ENCODE measurements at regions of chr13 and their contacts with region 1.

Region 1: DNA sequence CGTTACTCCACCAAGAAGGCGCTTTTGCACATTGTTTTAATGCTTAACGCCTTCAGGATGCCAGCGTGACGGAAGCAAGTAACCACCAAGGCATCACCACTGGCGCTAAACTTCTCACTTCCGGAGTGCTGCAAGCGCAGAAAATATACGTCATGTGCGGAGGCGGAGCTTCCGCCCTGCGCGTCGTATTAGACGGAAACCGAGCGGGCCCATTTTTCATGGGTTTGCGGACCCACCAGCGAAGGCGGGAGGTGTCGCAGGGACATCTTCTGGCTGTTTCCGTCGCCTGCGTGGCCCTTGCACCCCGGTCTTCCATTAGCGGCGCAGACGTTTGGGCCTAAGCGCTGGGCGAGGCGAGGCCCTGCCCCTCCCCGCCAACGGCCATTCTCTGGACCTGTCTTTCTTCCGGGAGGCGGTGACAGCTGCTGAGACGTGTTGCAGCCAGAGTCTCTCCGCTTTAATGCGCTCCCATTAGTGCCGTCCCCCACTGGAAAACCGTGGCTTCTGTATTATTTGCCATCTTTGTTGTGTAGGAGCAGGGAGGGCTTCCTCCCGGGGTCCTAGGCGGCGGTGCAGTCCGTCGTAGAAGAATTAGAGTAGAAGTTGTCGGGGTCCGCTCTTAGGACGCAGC is at the start of gene ERCC5:
- DNase-seq: peak; percentile 94 to 99 (median 97)
- ATAC-seq: peak; percentile 69
- H3K4me3 ChIP-seq: peak within 1 kb of the TSS; percentile 94 to 96
- H3K4me3 Mint-ChIP-seq: peak within 1 kb of the TSS; percentile 89
- H3K27ac ChIP-seq: peak within 1 kb of the TSS; percentile 98 to 99
- H3K27ac Mint-ChIP-seq: peak within 1 kb of the TSS; percentile 97
- H3K4me1 ChIP-seq: peaks cover 41% of the 10 kb centered on the region
- H3K4me1 Mint-ChIP-seq: peaks cover 45% of the 10 kb centered on the region
- H3K27me3 ChIP-seq: no peaks in the 10 kb centered on the region
- H3K27me3 Mint-ChIP-seq: no peaks in the 10 kb centered on the region
- CTCF ChIP-seq: no peak
- total RNA-seq, gene ERCC5: 109 to 121 TPM

Region 2: DNA sequence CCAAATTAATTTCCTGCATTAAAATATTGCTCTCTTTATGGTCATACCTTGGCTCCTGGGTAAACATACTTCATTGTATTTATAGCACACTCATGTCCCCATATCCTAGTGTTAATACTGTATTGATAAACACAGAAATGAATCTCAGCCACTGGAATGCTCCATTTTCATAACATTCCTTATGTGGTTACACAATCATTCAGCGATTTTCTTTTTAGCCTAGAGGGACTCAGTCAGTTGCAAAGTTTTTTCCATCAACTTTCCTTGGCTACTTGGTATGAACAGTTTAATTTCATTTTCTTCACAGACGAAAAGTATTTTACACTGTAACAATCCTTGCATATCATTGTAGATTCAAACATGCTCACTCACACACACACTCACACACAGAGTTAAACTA is 915.4 kb before region 1 on chr13:
- CTCF ChIA-PET with region 1: no interaction called
- POLR2A ChIA-PET with region 1: no interaction called
- intact Hi-C with region 1: no loop called
- DNase-seq: no peak
- ATAC-seq: no peak
- H3K4me3 ChIP-seq: no peak overlapping the region
- H3K4me3 Mint-ChIP-seq: no peak overlapping the region
- H3K27ac ChIP-seq: no peak overlapping the region
- H3K27ac Mint-ChIP-seq: no peak overlapping the region
- H3K4me1 ChIP-seq: no peaks in the 10 kb centered on the region
- H3K4me1 Mint-ChIP-seq: no peaks in the 10 kb centered on the region
- H3K27me3 ChIP-seq: no peaks in the 10 kb centered on the region
- H3K27me3 Mint-ChIP-seq: peaks cover 4% of the 10 kb centered on the region
- CTCF ChIP-seq: no peak

Region 3: GRCh38 chr13:102394158-102395053 is 451.3 kb before region 1 on chr13:
- CTCF ChIA-PET with region 1: no interaction called
- POLR2A ChIA-PET with region 1: interaction called, 4 read pairs
- intact Hi-C with region 1: loop called (anchors 2 to 5 kb)
- DNase-seq: peak; percentile 88 to 98 (median 97)
- ATAC-seq: peak; percentile 90
- H3K4me3 ChIP-seq: peak overlapping the region; percentile 79 to 96
- H3K4me3 Mint-ChIP-seq: peak overlapping the region; percentile 88
- H3K27ac ChIP-seq: peak overlapping the region; percentile 65 to 76
- H3K27ac Mint-ChIP-seq: peak overlapping the region; percentile 82
- H3K4me1 ChIP-seq: peaks cover 14% of the 10 kb centered on the region
- H3K4me1 Mint-ChIP-seq: peaks cover 8% of the 10 kb centered on the region
- H3K27me3 ChIP-seq: peaks cover 1 to 2% of the 10 kb centered on the region in 2 experiments
- H3K27me3 Mint-ChIP-seq: peaks cover 12% of the 10 kb centered on the region
- CTCF ChIP-seq: no peak

Region 4: DNA sequence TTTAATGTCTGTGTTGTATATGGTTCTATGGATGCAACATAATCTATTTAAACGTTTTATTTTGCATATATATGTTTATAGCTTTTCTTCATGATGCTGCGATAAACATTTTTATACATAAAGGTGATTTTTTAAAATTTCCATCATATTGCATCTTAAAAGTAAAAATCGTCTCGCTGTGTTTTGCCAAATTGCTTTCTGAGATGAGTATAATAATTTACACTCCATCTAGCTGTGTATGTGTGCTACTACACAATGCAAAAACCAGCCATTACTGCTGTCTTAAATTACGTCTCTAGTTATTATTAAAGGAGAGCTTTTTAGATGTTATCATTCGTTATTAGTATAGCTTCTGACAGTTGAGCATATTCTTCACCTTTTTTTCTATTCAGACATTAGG is 188.1 kb before region 1 on chr13:
- CTCF ChIA-PET with region 1: interaction called, 3 read pairs
- POLR2A ChIA-PET with region 1: no interaction called
- intact Hi-C with region 1: loop called in 1 of 2 experiments (anchors 5 kb)
- DNase-seq: peak in 2 of 9 experiments; percentile 13 to 27
- ATAC-seq: peak; percentile 55
- H3K4me3 ChIP-seq: no peak overlapping the region
- H3K4me3 Mint-ChIP-seq: no peak overlapping the region
- H3K27ac ChIP-seq: no peak overlapping the region
- H3K27ac Mint-ChIP-seq: no peak overlapping the region
- H3K4me1 ChIP-seq: no peaks in the 10 kb centered on the region
- H3K4me1 Mint-ChIP-seq: no peaks in the 10 kb centered on the region
- H3K27me3 ChIP-seq: no peaks in the 10 kb centered on the region
- H3K27me3 Mint-ChIP-seq: no peaks in the 10 kb centered on the region
- CTCF ChIP-seq: peak; percentile 63

Region 5: GRCh38 chr13:102773441-102774215 is 72.1 kb before region 1 on chr13 and contains the start of gene TEX30:
- CTCF ChIA-PET with region 1: interaction called, 3 read pairs
- POLR2A ChIA-PET with region 1: interaction called, 36 read pairs
- intact Hi-C with region 1: loop called (anchors 1 kb)
- DNase-seq: peak; percentile 75 to 93 (median 86)
- ATAC-seq: peak; percentile 96
- H3K4me3 ChIP-seq: peak within 1 kb of the TSS; percentile 66 to 70
- H3K4me3 Mint-ChIP-seq: peak within 1 kb of the TSS; percentile 88
- H3K27ac ChIP-seq: peak within 1 kb of the TSS; percentile 70 to 82
- H3K27ac Mint-ChIP-seq: peak within 1 kb of the TSS; percentile 91
- H3K4me1 ChIP-seq: peaks cover 15% of the 10 kb centered on the region
- H3K4me1 Mint-ChIP-seq: peaks cover 34% of the 10 kb centered on the region
- H3K27me3 ChIP-seq: no peaks in the 10 kb centered on the region
- H3K27me3 Mint-ChIP-seq: no peaks in the 10 kb centered on the region
- CTCF ChIP-seq: no peak
- total RNA-seq, gene TEX30: 10.4 to 10.9 TPM

Region 6: GRCh38 chr13:102870677-102871415 is 25.1 kb after region 1 on chr13:
- CTCF ChIA-PET with region 1: interaction called, 3 read pairs
- POLR2A ChIA-PET with region 1: interaction called, 6 read pairs
- intact Hi-C with region 1: loop called in 1 of 2 experiments (anchors 2 kb)
- DNase-seq: peak in 7 of 9 experiments; percentile 29 to 69 (median 56)
- ATAC-seq: peak; percentile 79
- H3K4me3 ChIP-seq: no peak overlapping the region
- H3K4me3 Mint-ChIP-seq: no peak overlapping the region
- H3K27ac ChIP-seq: peak overlapping the region in 1 of 2 experiments; percentile 4
- H3K27ac Mint-ChIP-seq: no peak overlapping the region
- H3K4me1 ChIP-seq: peaks cover 15% of the 10 kb centered on the region
- H3K4me1 Mint-ChIP-seq: peaks cover 24% of the 10 kb centered on the region
- H3K27me3 ChIP-seq: no peaks in the 10 kb centered on the region
- H3K27me3 Mint-ChIP-seq: no peaks in the 10 kb centered on the region
- CTCF ChIP-seq: peak; percentile 82

Measured in CD8-positive, alpha-beta T cell (primary cell).